Activated CD4-positive, alpha-beta T cell treated with anti-CD3 and anti-CD28 coated beads, Interleukin-2, amount 10 ng/mL, durations not matched to agents 24 days and 14 days (primary cell): ENCODE measurements at regions of chr11 and their contacts with region 1.

Region 1: GRCh38 chr11:65569973-65570918 is at the start of gene ZNRD2:
- DNase-seq: peak; percentile 100
- H3K4me3 Mint-ChIP-seq: peak within 1 kb of the TSS; percentile 97
- H3K27ac Mint-ChIP-seq: peak within 1 kb of the TSS; percentile 99
- H3K4me1 Mint-ChIP-seq: peaks cover 57% of the 10 kb centered on the region
- H3K27me3 Mint-ChIP-seq: no peaks in the 10 kb centered on the region
- total RNA-seq, gene ZNRD2: 83.3 and 83.4 TPM in 2 replicates

Region 2: DNA sequence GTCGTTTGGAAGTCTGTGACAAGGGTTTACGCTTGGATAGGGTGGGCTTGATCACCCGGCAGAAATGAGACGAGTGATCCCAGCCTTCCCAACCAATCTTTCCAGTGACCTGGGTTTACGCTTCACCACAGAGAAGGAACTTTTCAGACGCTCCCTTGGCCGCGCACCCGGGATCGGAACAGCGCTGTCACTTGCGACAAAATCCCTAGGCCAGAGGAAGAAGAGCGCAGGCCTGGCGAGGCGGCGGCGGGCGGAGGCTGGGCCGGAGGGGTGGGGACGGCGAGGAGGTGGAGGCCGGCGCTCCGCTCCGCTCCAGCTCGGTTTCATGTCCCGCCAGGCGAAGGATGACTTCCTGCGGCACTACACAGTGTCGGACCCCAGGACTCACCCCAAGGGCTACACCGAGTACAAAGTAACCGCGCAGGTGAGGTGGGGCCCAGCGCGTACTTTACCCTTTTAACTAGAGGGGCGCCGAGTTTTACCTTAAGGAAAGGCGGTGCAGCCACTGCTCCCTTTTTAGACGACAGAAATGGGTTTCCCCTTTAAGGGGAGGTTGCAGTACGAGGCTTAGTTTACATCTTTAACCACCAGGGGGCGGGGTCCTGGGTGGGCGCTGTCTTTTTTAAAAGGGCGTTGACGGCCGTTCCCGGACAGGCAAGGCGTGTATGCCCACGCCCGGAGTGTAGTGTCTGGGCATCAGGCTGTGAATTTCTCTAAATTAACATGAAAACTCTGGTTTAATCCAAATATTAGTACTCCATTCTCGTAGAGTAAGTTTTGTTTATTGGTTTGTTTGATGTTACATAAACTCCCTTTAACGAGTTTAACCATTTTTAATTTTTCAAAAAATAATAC is 542.8 kb before region 1 on chr11 and contains the start of gene SNX15:
- intact Hi-C with region 1: loop called (anchors 2 kb)
- DNase-seq: peak; percentile 98
- H3K4me3 Mint-ChIP-seq: peak within 1 kb of the TSS; percentile 74
- H3K27ac Mint-ChIP-seq: peak within 1 kb of the TSS; percentile 77
- H3K4me1 Mint-ChIP-seq: peaks cover 16% of the 10 kb centered on the region
- H3K27me3 Mint-ChIP-seq: no peaks in the 10 kb centered on the region
- total RNA-seq, gene SNX15: 15.9 and 17.9 TPM in 2 replicates

Region 3: DNA sequence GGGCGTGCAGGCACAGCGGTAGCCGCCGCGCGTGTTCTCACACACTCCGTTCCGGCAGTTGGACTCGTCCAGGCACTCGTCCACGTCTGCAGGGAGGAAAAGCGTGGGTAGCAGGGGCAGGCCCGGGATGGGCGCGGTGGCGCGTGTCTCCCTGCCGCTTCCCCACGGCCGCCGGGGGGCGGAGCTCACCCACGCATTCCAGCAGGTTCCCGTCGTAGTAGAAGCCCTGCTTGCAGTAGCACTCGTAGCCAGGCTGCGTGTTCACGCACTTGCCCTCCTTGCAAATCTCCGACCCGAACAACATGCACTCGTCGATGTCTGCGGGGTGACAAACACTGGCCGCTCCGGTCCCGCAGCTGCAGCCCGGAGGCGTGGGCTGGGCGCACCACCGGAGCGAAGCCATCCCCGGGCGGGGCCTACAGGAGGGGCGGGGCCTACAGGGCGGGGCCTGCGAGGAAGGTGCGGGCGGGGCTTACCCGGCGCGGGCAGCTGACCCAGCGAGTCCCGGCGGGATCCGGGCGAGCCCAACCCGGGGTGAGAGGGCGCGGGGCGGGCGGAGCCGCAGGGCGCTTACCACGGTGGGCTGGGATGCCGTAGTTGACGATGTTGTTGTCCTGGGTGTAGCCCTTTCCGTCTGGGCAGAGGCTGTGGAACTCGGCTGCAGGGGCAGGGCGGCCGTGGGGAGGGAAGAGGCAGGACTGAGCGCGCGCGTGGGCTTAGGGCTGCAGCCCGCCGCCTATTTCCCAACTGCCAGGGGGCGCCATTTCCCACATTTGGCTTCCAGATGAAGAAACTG is 29.8 kb before region 1 on chr11:
- intact Hi-C with region 1: loop called (anchors 1 kb)
- DNase-seq: peak; percentile 96
- H3K4me3 Mint-ChIP-seq: peak overlapping the region; percentile 85
- H3K27ac Mint-ChIP-seq: peak overlapping the region; percentile 85
- H3K4me1 Mint-ChIP-seq: peaks cover 17% of the 10 kb centered on the region
- H3K27me3 Mint-ChIP-seq: no peaks in the 10 kb centered on the region

Region 4: GRCh38 chr11:65558002-65558931 is 12.0 kb before region 1 on chr11 and contains the start of gene LTBP3:
- intact Hi-C with region 1: loop called (anchors 1 kb)
- DNase-seq: peak; percentile 82
- H3K4me3 Mint-ChIP-seq: peak within 1 kb of the TSS; percentile 86
- H3K27ac Mint-ChIP-seq: peak within 1 kb of the TSS; percentile 88
- H3K4me1 Mint-ChIP-seq: peaks cover 49% of the 10 kb centered on the region
- H3K27me3 Mint-ChIP-seq: no peaks in the 10 kb centered on the region
- total RNA-seq, gene LTBP3: 94.9 and 96.9 TPM in 2 replicates

Region 5: GRCh38 chr11:65637794-65638317 is 67.6 kb after region 1 on chr11 and contains the start of gene SIPA1:
- intact Hi-C with region 1: loop called (anchors 2 kb)
- DNase-seq: peak; percentile 95
- H3K4me3 Mint-ChIP-seq: peak within 1 kb of the TSS; percentile 84
- H3K27ac Mint-ChIP-seq: peak within 1 kb of the TSS; percentile 89
- H3K4me1 Mint-ChIP-seq: peaks cover 31% of the 10 kb centered on the region
- H3K27me3 Mint-ChIP-seq: no peaks in the 10 kb centered on the region
- total RNA-seq, gene SIPA1: 118 and 125 TPM in 2 replicates

Region 6: GRCh38 chr11:65817835-65818742 is 247.8 kb after region 1 on chr11:
- intact Hi-C with region 1: loop called (anchors 1 kb)
- DNase-seq: peak; percentile 98
- H3K4me3 Mint-ChIP-seq: peak overlapping the region; percentile 83
- H3K27ac Mint-ChIP-seq: peak overlapping the region; percentile 87
- H3K4me1 Mint-ChIP-seq: peaks cover 17% of the 10 kb centered on the region
- H3K27me3 Mint-ChIP-seq: peaks cover 2% of the 10 kb centered on the region